ENCODE measurements at regions of chrX and their contacts with region 1.

Region 1: GRCh38 chrX:107776649-107777535 is 641 bp upstream of the NCBP2L start:
- DNase-seq: peak; percentile 77 to 90 (median 81)
- H3K4me3 ChIP-seq: peak overlapping the region; percentile 59
- H3K27ac ChIP-seq: peak overlapping the region; percentile 72 to 78
- H3K4me1 ChIP-seq: no peaks in the 10 kb centered on the region
- H3K27me3 ChIP-seq: no peaks in the 10 kb centered on the region
- CTCF ChIP-seq: peak; percentile 58 to 86 (median 79)
- EP300 ChIP-seq: no peak
- POLR2A ChIP-seq: peak; percentile 18

Region 2: DNA sequence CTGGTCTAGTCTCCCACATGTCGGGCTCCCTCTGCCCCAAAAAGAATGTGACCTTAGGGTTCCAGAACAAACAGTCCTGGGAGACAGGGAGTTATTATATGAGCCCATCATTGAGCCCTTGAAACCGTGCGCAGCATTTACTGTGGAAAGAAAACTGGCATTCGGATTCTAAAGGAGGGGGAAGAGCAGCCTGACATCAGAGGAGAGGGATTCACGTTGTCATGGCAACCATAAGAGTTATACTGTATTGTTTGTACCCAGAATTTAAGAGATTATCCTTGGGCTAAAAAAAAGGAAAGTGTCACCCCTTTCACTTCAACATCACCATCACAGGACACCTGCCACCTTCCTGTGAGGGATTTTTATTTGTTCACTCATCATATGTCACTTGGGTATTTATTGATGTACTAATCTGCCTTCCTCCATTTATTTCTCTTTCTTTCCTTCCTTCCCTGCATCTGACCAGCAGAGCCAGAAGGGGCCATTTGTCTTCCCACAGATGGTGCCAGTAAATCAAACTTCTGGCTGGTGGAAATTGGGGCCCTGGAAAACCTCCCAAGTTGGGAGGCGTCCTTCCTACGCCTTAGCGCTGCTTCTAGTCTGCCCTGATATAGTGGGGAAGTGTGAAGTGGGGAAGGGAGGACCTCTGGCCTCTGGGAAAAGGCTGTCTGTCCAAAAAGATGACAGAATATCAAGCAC is 392.3 kb before region 1 on chrX:
- intact Hi-C with region 1: no loop called
- DNase-seq: no peak
- H3K4me3 ChIP-seq: no peak overlapping the region
- H3K27ac ChIP-seq: no peak overlapping the region
- H3K4me1 ChIP-seq: no peaks in the 10 kb centered on the region
- H3K27me3 ChIP-seq: no peaks in the 10 kb centered on the region
- CTCF ChIP-seq: no peak
- EP300 ChIP-seq: no peak
- POLR2A ChIP-seq: no peak

Region 3: GRCh38 chrX:107654872-107655761 is 121.8 kb before region 1 on chrX:
- intact Hi-C with region 1: loop called in 3 of 4 experiments (anchors 5 kb)
- DNase-seq: peak; percentile 45 to 68 (median 64)
- H3K4me3 ChIP-seq: no peak overlapping the region
- H3K27ac ChIP-seq: no peak overlapping the region
- H3K4me1 ChIP-seq: no peaks in the 10 kb centered on the region
- H3K27me3 ChIP-seq: no peaks in the 10 kb centered on the region
- CTCF ChIP-seq: peak in 1 of 3 donors; percentile 57
- EP300 ChIP-seq: no peak
- POLR2A ChIP-seq: no peak

Region 4: GRCh38 chrX:107672955-107673378 is 103.9 kb before region 1 on chrX:
- intact Hi-C with region 1: loop called in 3 of 4 experiments (anchors 2 to 5 kb)
- DNase-seq: peak; percentile 76 to 89 (median 83)
- H3K4me3 ChIP-seq: no peak overlapping the region
- H3K27ac ChIP-seq: peak overlapping the region in 1 of 2 donors; percentile 76
- H3K4me1 ChIP-seq: peaks cover 2% of the 10 kb centered on the region
- H3K27me3 ChIP-seq: no peaks in the 10 kb centered on the region
- CTCF ChIP-seq: peak; percentile 28 to 79 (median 67)
- EP300 ChIP-seq: no peak
- POLR2A ChIP-seq: peak; percentile 23

Region 5: DNA sequence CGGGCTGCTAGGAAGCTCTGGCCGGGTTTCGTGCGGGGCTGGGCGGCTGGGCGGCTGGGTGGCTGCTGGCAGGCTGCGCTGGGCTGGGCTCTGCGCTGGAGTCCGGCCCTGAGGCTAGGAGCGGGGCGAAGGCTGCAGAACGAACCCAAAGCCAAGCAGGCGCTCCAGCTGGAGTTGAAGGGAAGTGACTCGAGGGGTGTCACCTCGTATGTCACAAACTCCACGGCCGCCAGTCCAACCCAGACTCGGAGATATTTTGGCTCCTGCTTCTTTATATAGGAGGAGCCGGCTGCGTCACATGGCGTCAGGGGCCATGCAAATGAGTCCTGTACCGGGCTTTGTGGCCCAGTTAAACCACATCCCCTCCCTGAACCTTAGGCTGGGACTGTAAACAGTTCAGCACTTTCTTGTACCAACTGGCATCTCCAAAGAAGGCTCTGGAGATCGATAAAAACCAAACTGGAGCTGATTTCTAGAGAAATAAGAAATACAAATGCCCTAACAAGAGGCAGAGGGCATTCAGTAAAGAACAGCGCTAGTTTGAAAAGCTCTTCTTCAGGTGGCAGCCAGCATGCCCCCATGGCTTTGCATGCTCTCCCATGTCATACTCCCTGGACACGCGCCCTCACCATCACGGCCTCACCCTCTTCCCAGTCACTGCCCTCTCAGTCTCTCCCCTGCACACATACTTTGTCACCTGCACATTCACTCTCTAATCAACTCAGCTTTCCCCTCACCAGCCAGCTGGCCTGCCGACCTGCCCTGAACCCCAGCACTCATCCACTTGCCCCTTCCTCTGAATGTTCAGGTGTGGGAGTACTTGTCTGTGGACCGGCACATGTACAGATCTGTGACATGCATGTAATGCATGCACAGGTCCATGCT is 59.8 kb before region 1 on chrX:
- intact Hi-C with region 1: loop called in 3 of 4 experiments (anchors 1 to 10 kb)
- DNase-seq: peak; percentile 68 to 91 (median 76)
- H3K4me3 ChIP-seq: peak overlapping the region; percentile 50
- H3K27ac ChIP-seq: peak overlapping the region; percentile 83 to 96
- H3K4me1 ChIP-seq: peaks cover 10% of the 10 kb centered on the region
- H3K27me3 ChIP-seq: no peaks in the 10 kb centered on the region
- CTCF ChIP-seq: peak in 1 of 3 donors; percentile 23
- EP300 ChIP-seq: no peak
- POLR2A ChIP-seq: peak; percentile 92

Region 6: GRCh38 chrX:108216919-108217571 is 440.2 kb after region 1 on chrX:
- intact Hi-C with region 1: no loop called
- DNase-seq: peak in 2 of 5 donors; percentile 16 to 27
- H3K4me3 ChIP-seq: no peak overlapping the region
- H3K27ac ChIP-seq: peak overlapping the region in 1 of 2 donors; percentile 40
- H3K4me1 ChIP-seq: peaks cover 4% of the 10 kb centered on the region
- H3K27me3 ChIP-seq: no peaks in the 10 kb centered on the region
- CTCF ChIP-seq: no peak
- EP300 ChIP-seq: no peak
- POLR2A ChIP-seq: no peak

Measured in ovary (tissue), 10 donors.